ENCODE measurements at regions of chrX and their contacts with region 1.

Region 1: GRCh38 chrX:17689971-17690409 is 47.3 kb upstream of the SCML1 start:
- DNase-seq: peak; percentile 56
- ATAC-seq: peak; percentile 76
- H3K4me3 Mint-ChIP-seq: no peak overlapping the region
- H3K27ac Mint-ChIP-seq: no peak overlapping the region
- H3K4me1 Mint-ChIP-seq: peaks cover 4% of the 10 kb centered on the region
- H3K27me3 Mint-ChIP-seq: peaks cover 2% of the 10 kb centered on the region
- CTCF ChIP-seq: peak; percentile 49

Region 2: GRCh38 chrX:17242470-17242869 is 447.5 kb before region 1 on chrX:
- CTCF ChIA-PET with region 1: interaction called, 5 read pairs
- POLR2A ChIA-PET with region 1: no interaction called
- intact Hi-C with region 1: loop called (anchors 10 kb)
- DNase-seq: peak; percentile 49
- ATAC-seq: no peak
- H3K4me3 Mint-ChIP-seq: no peak overlapping the region
- H3K27ac Mint-ChIP-seq: no peak overlapping the region
- H3K4me1 Mint-ChIP-seq: no peaks in the 10 kb centered on the region
- H3K27me3 Mint-ChIP-seq: no peaks in the 10 kb centered on the region
- CTCF ChIP-seq: peak; percentile 40

Region 3: GRCh38 chrX:17374619-17375366 is 315.2 kb before region 1 on chrX and contains the start of gene NHS:
- CTCF ChIA-PET with region 1: no interaction called
- POLR2A ChIA-PET with region 1: no interaction called
- intact Hi-C with region 1: loop called (anchors 5 kb)
- DNase-seq: peak; percentile 21
- ATAC-seq: peak; percentile 41
- H3K4me3 Mint-ChIP-seq: peak within 1 kb of the TSS; percentile 17
- H3K27ac Mint-ChIP-seq: no peak within 1 kb of the TSS
- H3K4me1 Mint-ChIP-seq: peaks cover 6% of the 10 kb centered on the region
- H3K27me3 Mint-ChIP-seq: peaks cover 34% of the 10 kb centered on the region
- CTCF ChIP-seq: no peak
- total RNA-seq, gene NHS: 6.9 to 7.3 TPM

Region 4: GRCh38 chrX:17758382-17758781 is 68.4 kb after region 1 on chrX:
- CTCF ChIA-PET with region 1: no interaction called
- POLR2A ChIA-PET with region 1: no interaction called
- intact Hi-C with region 1: no loop called
- DNase-seq: no peak
- ATAC-seq: no peak
- H3K4me3 Mint-ChIP-seq: no peak overlapping the region
- H3K27ac Mint-ChIP-seq: no peak overlapping the region
- H3K4me1 Mint-ChIP-seq: peaks cover 5% of the 10 kb centered on the region
- H3K27me3 Mint-ChIP-seq: no peaks in the 10 kb centered on the region
- CTCF ChIP-seq: no peak